ENCODE measurements at regions of chr17 and their contacts with region 1.

Region 1: DNA sequence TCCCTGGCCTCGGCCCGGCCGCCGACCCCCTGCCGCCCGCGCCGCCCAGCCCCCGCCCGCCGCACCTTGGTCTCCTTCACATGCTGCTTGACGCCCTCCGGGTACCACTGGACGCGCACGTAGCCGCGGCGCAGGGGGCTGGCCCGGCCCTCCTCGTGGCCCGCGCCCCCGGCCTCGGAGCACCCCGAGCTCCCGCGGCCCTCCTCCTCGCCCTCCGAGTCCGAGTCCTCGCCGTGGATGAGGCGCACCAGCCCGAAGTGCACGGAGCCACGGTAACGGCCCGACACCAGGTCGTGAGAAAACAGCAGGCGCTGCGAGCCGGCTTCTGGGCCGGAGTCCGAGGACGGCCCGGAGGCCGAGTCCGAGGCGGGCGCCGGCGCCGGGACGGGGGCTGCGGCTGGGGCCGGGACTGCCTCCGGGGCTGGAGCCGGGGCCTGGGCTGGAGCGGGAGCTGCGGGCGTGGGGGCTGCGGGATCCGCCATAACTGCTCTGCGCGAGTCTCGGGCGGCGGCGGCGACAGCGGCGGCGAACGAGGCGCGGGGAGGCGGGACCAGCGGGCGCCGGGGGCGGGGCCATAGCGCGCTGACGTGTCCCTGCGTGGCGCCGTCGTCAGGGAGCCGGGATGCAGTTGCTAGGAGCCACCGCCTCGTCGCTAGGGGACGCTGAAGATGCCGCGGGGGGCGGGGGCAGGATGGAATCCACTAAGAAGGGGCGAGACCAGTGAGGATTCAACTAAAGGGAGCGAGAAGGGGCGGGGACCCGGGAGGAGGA is at the start of gene UBE2O:
- DNase-seq: peak; percentile 80
- ATAC-seq: peak; percentile 95
- H3K4me3 ChIP-seq: peak within 1 kb of the TSS; percentile 87
- H3K27ac ChIP-seq: peak within 1 kb of the TSS; percentile 79
- H3K4me1 ChIP-seq: peaks cover 11% of the 10 kb centered on the region
- H3K27me3 ChIP-seq: no peaks in the 10 kb centered on the region
- CTCF ChIP-seq: peak; percentile 65
- POLR2A ChIP-seq: peak; percentile 74
- RAD21 ChIP-seq: no peak
- total RNA-seq, gene UBE2O: 17.6 and 20.0 TPM in 2 replicates

Region 2: DNA sequence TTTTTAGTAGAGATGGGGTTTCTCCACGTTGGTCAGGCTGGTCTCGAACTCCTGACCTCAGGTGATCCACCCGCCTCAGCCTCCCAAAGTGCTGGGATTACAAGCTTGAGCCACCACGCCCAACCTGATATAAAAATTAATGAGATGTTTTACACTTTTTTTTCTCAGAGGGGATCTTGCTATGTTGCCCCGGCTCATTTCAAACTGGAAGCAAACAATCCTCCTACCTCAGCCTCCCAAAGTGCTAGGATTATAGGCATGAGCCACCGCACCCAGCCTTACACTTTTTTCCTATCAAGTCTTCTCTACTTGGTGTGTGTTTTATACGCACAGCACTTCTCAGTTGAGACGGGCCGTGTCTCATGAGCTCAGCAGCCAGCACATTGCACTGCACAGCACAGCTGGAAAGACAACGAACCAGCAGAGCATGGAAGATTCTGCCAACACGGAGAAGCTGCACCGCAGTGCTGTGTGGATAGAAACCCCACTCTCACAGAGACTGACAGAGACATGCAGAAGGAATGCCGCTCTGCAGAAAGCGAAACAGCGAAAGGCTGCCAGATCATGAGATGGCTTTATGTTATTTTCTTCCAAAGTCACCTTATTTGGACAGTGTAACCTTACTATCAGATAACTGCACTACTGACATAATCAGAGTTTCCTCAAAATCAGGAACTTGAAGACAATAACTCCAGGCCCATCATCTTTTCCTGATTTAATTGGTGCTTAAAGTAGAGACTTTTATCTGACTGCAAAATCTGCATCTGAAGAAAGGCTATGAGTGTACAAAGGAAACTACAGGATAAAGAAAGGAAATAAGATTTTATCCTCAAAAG is 138.2 kb before region 1 on chr17:
- CTCF ChIA-PET with region 1: no interaction called
- POLR2A ChIA-PET with region 1: no interaction called
- dilution Hi-C with region 1: no loop called
- in situ Hi-C with region 1: no loop called
- intact Hi-C with region 1: loop called (anchors 10 kb)
- DNase-seq: peak; percentile 63
- ATAC-seq: peak; percentile 24
- H3K4me3 ChIP-seq: no peak overlapping the region
- H3K27ac ChIP-seq: peak overlapping the region; percentile 44; the same call in 1 of the 2 replicates
- H3K4me1 ChIP-seq: peaks cover 5% of the 10 kb centered on the region; the same call in 1 of the 2 replicates
- H3K27me3 ChIP-seq: no peaks in the 10 kb centered on the region
- CTCF ChIP-seq: no peak
- POLR2A ChIP-seq: no peak
- RAD21 ChIP-seq: no peak